ENCODE measurements at regions of chr2 and their contacts with region 1.

Region 1: GRCh38 chr2:62306751-62307468 is 111.0 kb downstream of the B3GNT2 start:
- DNase-seq: peak; percentile 73
- H3K4me3 Mint-ChIP-seq: no peak overlapping the region
- H3K27ac Mint-ChIP-seq: peak overlapping the region; percentile 90
- H3K4me1 Mint-ChIP-seq: peaks cover 74% of the 10 kb centered on the region
- H3K27me3 Mint-ChIP-seq: no peaks in the 10 kb centered on the region

Region 2: GRCh38 chr2:61470965-61471904 is 835.7 kb before region 1 on chr2 and contains the start of gene USP34:
- CTCF ChIA-PET with region 1: no interaction called
- intact Hi-C with region 1: loop called (anchors 5 kb)
- DNase-seq: peak; percentile 94
- H3K4me3 Mint-ChIP-seq: peak within 1 kb of the TSS; percentile 98
- H3K27ac Mint-ChIP-seq: peak within 1 kb of the TSS; percentile 97
- H3K4me1 Mint-ChIP-seq: peaks cover 31% of the 10 kb centered on the region
- H3K27me3 Mint-ChIP-seq: no peaks in the 10 kb centered on the region
- total RNA-seq, gene USP34: 59.5 to 60.4 TPM

Region 3: GRCh38 chr2:61993444-61994024 is 313.4 kb before region 1 on chr2:
- CTCF ChIA-PET with region 1: no interaction called
- intact Hi-C with region 1: loop called (anchors 5 kb)
- DNase-seq: peak; percentile 46
- H3K4me3 Mint-ChIP-seq: no peak overlapping the region
- H3K27ac Mint-ChIP-seq: no peak overlapping the region
- H3K4me1 Mint-ChIP-seq: peaks cover 4% of the 10 kb centered on the region
- H3K27me3 Mint-ChIP-seq: no peaks in the 10 kb centered on the region

Region 4: DNA sequence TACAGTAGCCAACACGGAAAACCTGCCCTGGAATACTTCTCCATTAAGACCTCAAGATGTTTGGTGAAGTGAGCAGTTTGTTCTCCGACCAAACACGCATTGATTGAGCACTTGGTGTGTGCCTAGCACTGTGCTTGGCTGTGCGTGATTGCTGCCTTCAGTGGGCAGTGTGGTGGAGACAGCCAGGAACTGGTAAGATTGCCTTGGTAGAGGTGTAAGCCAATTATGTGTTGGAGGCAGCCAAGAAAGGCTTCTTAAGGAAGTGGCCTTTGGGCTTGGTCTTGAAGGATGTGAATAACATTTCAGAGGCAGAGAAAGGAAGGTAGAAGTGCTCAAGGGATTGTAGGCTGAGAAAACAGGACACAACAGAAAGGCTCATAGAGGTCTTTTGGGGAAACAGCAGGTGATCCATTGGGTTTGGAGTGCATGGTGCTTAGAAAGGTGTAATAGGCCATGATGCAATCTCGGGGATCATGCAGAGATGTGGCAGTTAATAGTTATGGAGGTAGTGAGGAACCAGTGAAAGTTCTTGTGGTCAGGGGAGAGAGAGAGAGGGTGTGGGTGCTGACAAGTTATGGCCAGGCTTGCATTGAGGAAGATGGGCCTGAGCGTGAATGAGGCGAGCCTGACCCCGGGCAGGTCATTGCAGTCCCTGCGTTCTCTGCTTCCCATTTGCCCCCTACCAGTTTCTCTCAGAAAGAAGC is 104.7 kb before region 1 on chr2:
- CTCF ChIA-PET with region 1: interaction called, 4 read pairs
- intact Hi-C with region 1: loop called (anchors 1 kb)
- DNase-seq: peak; percentile 35
- H3K4me3 Mint-ChIP-seq: peak overlapping the region; percentile 17
- H3K27ac Mint-ChIP-seq: peak overlapping the region; percentile 97
- H3K4me1 Mint-ChIP-seq: peaks cover 79% of the 10 kb centered on the region
- H3K27me3 Mint-ChIP-seq: no peaks in the 10 kb centered on the region

Region 5: DNA sequence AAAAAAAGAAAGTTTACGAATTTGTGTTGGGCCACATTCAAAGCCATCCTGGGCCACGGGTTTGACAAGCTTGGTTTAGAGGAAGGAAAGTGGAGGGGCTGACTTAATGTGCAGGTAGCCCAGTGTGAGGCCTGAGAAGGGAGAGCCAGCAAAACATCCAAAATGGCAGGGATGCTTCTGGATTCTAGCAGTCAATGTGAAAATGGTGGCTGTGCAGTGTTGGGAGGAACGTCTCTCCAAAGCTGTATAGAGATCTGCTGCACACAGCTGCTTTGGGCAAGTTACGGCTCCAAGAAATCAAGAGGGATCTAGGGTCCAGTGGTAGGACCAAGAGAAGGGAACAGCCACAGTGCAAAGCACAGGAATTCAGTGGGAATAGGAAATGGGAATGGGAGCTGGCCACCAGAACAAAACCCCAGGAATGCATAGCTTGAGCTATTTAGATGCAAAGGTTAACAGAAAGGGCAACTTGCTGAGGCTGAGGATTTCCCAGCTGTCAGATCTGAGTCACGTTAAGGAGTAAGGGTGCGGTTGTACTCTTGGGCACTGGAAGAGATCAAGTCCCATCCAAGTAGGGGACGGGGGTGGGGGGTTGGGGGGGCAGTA is 40.4 kb before region 1 on chr2:
- CTCF ChIA-PET with region 1: no interaction called
- intact Hi-C with region 1: no loop called
- DNase-seq: no peak
- H3K4me3 Mint-ChIP-seq: no peak overlapping the region
- H3K27ac Mint-ChIP-seq: no peak overlapping the region
- H3K4me1 Mint-ChIP-seq: no peaks in the 10 kb centered on the region
- H3K27me3 Mint-ChIP-seq: no peaks in the 10 kb centered on the region

Region 6: GRCh38 chr2:62362561-62362960 is 55.7 kb after region 1 on chr2:
- CTCF ChIA-PET with region 1: no interaction called
- intact Hi-C with region 1: no loop called
- DNase-seq: no peak
- H3K4me3 Mint-ChIP-seq: no peak overlapping the region
- H3K27ac Mint-ChIP-seq: no peak overlapping the region
- H3K4me1 Mint-ChIP-seq: no peaks in the 10 kb centered on the region
- H3K27me3 Mint-ChIP-seq: no peaks in the 10 kb centered on the region

Region 7: GRCh38 chr2:62410015-62410453 is 103.1 kb after region 1 on chr2:
- CTCF ChIA-PET with region 1: interaction called, 5 read pairs
- intact Hi-C with region 1: loop called (anchors 5 kb)
- DNase-seq: no peak
- H3K4me3 Mint-ChIP-seq: no peak overlapping the region
- H3K27ac Mint-ChIP-seq: no peak overlapping the region
- H3K4me1 Mint-ChIP-seq: peaks cover 3% of the 10 kb centered on the region
- H3K27me3 Mint-ChIP-seq: no peaks in the 10 kb centered on the region